Common myeloid progenitor, CD34-positive (primary cell): ENCODE measurements at regions of chr1 and their contacts with region 1.

Region 1: GRCh38 chr1:231487019-231487418 is 41.5 kb upstream of the TSNAX start:
- DNase-seq: peak; percentile 4 to 66 (median 54)
- H3K4me3 ChIP-seq: no peak overlapping the region
- H3K27ac ChIP-seq: no peak overlapping the region
- H3K4me1 ChIP-seq: no peaks in the 10 kb centered on the region
- H3K27me3 ChIP-seq: peaks cover 0 to 55% (median 24%) of the 10 kb centered on the region in 5 experiments

Region 2: GRCh38 chr1:231446138-231446537 is 40.9 kb before region 1 on chr1:
- CTCF ChIA-PET with region 1: no interaction called
- POLR2A ChIA-PET with region 1: interaction called, 10 read pairs
- DNase-seq: no peak
- H3K4me3 ChIP-seq: no peak overlapping the region
- H3K27ac ChIP-seq: no peak overlapping the region
- H3K4me1 ChIP-seq: no peaks in the 10 kb centered on the region
- H3K27me3 ChIP-seq: peaks cover 0 to 61% (median 11%) of the 10 kb centered on the region in 5 experiments

Region 3: GRCh38 chr1:231558708-231559205 is 71.7 kb after region 1 on chr1:
- CTCF ChIA-PET with region 1: no interaction called
- POLR2A ChIA-PET with region 1: no interaction called
- DNase-seq: no peak
- H3K4me3 ChIP-seq: no peak overlapping the region
- H3K27ac ChIP-seq: no peak overlapping the region
- H3K4me1 ChIP-seq: no peaks in the 10 kb centered on the region
- H3K27me3 ChIP-seq: no peaks in the 10 kb centered on the region